ENCODE measurements at regions of chr2 and their contacts with region 1.

Region 1: GRCh38 chr2:42095923-42096408 is 48.1 kb downstream of the PKDCC start:
- DNase-seq: peak; percentile 57
- H3K4me3 Mint-ChIP-seq: no peak overlapping the region
- H3K27ac Mint-ChIP-seq: no peak overlapping the region
- H3K4me1 Mint-ChIP-seq: peaks cover 30% of the 10 kb centered on the region
- H3K27me3 Mint-ChIP-seq: peaks cover 28% of the 10 kb centered on the region

Region 2: DNA sequence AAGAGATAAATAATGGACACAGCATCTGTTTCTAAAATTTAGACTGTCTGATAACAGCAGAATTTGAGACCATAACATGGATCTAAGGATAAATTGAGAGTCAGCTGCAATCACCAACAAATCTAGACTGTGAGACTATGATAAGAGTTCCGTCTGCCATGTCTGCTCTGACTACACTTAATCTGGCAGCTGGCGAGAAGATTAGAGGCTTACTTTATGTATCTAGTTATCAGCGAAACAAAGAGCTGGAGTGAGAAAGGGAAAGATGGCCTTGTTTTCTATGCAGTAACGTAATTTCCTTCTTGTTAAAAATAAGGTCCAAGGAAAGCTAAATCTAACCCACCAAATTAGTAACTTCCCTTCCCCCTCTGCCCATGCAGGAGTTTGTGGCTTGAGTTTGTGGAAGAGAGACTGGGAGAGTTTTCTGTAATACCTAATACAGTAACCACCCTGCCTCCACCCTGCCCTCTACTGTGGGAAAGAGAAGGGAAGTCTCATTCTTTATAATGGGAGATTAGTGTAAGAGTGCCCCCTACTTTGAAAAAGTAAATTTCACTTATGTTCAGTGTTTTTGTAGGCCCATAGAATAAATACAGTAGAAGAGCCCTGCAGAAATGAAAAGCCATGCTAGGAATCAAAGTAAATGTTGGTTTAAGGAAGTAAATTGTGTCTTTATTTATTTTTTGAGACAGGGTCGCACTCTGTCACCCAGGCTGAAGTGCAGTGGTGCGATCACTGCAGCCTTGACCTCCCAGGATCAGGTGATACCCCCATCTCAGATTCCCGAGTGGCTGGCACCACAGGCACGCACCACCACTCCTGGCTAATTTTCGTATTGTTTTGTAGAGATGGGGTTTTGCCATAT is 100.7 kb after region 1 on chr2:
- intact Hi-C with region 1: loop called (anchors 1 kb)
- DNase-seq: no peak
- H3K4me3 Mint-ChIP-seq: no peak overlapping the region
- H3K27ac Mint-ChIP-seq: no peak overlapping the region
- H3K4me1 Mint-ChIP-seq: peaks cover 38% of the 10 kb centered on the region
- H3K27me3 Mint-ChIP-seq: no peaks in the 10 kb centered on the region

Region 3: GRCh38 chr2:42238644-42239288 is 142.8 kb after region 1 on chr2:
- intact Hi-C with region 1: loop called (anchors 1 kb)
- DNase-seq: no peak
- H3K4me3 Mint-ChIP-seq: no peak overlapping the region
- H3K27ac Mint-ChIP-seq: no peak overlapping the region
- H3K4me1 Mint-ChIP-seq: peaks cover 10% of the 10 kb centered on the region
- H3K27me3 Mint-ChIP-seq: no peaks in the 10 kb centered on the region

Region 4: GRCh38 chr2:42328148-42328833 is 232.3 kb after region 1 on chr2:
- intact Hi-C with region 1: loop called (anchors 1 kb)
- DNase-seq: no peak
- H3K4me3 Mint-ChIP-seq: no peak overlapping the region
- H3K27ac Mint-ChIP-seq: no peak overlapping the region
- H3K4me1 Mint-ChIP-seq: peaks cover 9% of the 10 kb centered on the region
- H3K27me3 Mint-ChIP-seq: no peaks in the 10 kb centered on the region